Panc1 (cell line): ENCODE measurements at regions of chr5 and their contacts with region 1.

Region 1: GRCh38 chr5:154503698-154504039 is 25.6 kb upstream of the HAND1 start:
- DNase-seq: no peak
- ATAC-seq: no peak
- H3K4me3 ChIP-seq: no peak overlapping the region
- H3K27ac ChIP-seq: no peak overlapping the region
- H3K4me1 ChIP-seq: no peaks in the 10 kb centered on the region
- H3K27me3 ChIP-seq: no peaks in the 10 kb centered on the region
- CTCF ChIP-seq: no peak

Region 2: GRCh38 chr5:154478224-154478565 is 25.5 kb before region 1 on chr5 and contains the start of gene HAND1:
- CTCF ChIA-PET with region 1: no interaction called
- POLR2A ChIA-PET with region 1: no interaction called
- in situ Hi-C with region 1: no loop called
- intact Hi-C with region 1: no loop called
- DNase-seq: no peak
- ATAC-seq: peak; percentile 90
- H3K4me3 ChIP-seq: peak within 1 kb of the TSS; percentile 45 to 48
- H3K27ac ChIP-seq: no peak within 1 kb of the TSS
- H3K4me1 ChIP-seq: no peaks in the 10 kb centered on the region; the same call in 1 of the 2 replicates
- H3K27me3 ChIP-seq: peaks cover 17% of the 10 kb centered on the region
- CTCF ChIP-seq: no peak
- total RNA-seq, gene HAND1: 0.10 TPM

Region 3: DNA sequence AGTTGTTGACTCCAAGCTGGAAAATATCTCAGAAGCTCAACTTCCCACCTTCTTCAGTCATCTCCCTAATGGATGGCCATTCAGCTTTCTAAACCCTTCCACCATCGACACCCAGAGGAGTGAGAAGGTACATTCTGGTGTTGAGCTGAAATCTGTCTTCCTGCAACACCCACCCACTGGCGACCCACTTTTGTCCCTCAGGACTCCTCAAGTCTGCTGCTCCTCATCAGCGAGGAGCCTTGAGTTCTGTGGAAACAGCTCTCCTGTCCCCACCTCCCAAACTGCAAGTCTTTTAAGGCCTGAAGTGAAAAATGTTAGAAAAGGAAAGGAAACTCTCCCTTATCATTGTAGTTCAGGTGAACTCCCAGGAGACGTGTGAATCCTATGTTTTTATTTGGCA is 85.8 kb after region 1 on chr5:
- CTCF ChIA-PET with region 1: interaction called, 18 read pairs
- POLR2A ChIA-PET with region 1: no interaction called
- in situ Hi-C with region 1: no loop called
- intact Hi-C with region 1: no loop called
- DNase-seq: no peak
- ATAC-seq: no peak
- H3K4me3 ChIP-seq: no peak overlapping the region
- H3K27ac ChIP-seq: no peak overlapping the region
- H3K4me1 ChIP-seq: no peaks in the 10 kb centered on the region
- H3K27me3 ChIP-seq: peaks cover 2% of the 10 kb centered on the region; the same call in 1 of the 2 replicates
- CTCF ChIP-seq: no peak

Region 4: DNA sequence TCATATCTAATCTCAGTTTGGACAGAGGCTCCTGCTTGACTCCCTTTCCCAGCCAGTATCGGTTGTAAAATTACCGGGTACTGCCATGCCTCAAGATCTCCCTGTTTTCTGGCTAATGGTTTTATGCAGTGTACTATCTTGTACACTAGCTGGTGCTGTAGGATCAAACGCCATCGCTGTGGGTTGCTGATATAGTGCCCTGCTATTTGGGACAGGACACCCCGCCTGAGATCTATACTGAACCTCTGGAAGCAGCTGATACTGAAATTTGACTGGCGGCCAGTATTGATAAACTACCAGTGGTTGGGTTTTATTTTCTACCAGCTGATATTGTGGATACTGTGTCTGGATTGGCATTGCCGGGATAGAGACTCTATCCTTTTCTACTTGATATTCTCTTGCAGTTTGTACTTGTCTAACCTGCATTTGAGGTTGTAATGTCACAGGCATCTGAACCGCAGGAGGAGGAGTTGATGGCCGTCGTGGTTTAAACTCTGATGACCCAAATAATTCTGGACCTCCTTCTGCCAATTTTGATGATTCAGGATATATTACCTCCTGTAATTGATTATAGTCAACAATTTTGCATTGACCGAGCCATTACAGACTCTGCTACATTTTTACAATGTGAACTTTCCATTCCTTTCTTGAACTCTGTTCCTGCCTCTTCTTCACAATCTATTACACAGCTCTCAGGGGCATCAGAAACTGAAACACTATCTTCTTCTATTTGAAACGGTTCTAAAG is 139.0 kb after region 1 on chr5:
- CTCF ChIA-PET with region 1: no interaction called
- POLR2A ChIA-PET with region 1: no interaction called
- in situ Hi-C with region 1: no loop called
- intact Hi-C with region 1: no loop called
- DNase-seq: no peak
- ATAC-seq: peak; percentile 98
- H3K4me3 ChIP-seq: no peak overlapping the region
- H3K27ac ChIP-seq: no peak overlapping the region
- H3K4me1 ChIP-seq: no peaks in the 10 kb centered on the region
- H3K27me3 ChIP-seq: no peaks in the 10 kb centered on the region
- CTCF ChIP-seq: peak; percentile 93